ENCODE measurements at regions of chr10 and their contacts with region 1.

Region 1: GRCh38 chr10:89262086-89263051 is 10.8 kb upstream of the LIPA start:
- DNase-seq: peak; percentile 45 to 96
- H3K4me3 ChIP-seq: peak overlapping the region; percentile 20; the same call in 1 of the 2 replicates
- H3K27ac ChIP-seq: peak overlapping the region; percentile 95
- H3K4me1 ChIP-seq: peaks cover 43% of the 10 kb centered on the region
- H3K27me3 ChIP-seq: no peaks in the 10 kb centered on the region
- CTCF ChIP-seq: no peak

Region 2: DNA sequence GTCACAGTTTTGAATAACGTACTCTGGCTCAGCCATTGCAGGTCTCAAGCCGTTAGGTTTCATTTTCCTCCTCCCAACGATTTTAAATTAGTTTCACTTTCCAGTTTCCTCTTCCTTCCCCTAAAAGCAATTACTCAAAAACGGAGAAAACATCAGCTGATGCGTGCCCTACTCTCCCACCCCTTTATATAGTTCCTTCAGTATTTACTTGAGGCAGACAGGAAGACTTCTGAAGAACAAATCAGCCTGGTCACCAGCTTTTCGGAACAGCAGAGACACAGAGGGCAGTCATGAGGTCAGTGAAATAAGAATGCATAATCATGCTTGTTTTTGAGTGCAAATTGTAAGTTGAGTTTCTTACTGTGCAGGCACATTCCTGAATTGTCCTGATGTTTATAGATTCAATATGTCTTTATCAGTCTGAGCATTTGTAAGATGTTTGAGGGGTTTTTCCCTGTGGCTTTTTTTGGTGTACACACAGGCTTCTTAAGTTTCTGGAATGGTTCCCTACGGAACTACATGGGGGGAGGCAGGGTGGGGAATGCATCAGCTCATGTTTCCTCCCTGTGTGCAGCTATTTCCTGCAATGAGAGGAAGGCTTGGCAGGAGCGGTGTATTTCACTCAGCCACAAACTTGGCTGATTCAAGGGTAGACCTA is 65.5 kb after region 1 on chr10 and contains the start of gene IFIT3:
- CTCF ChIA-PET with region 1: no interaction called
- POLR2A ChIA-PET with region 1: no interaction called
- intact Hi-C with region 1: loop called (anchors 1 kb)
- DNase-seq: peak; percentile 36 to 70
- H3K4me3 ChIP-seq: peak within 1 kb of the TSS; percentile 70
- H3K27ac ChIP-seq: peak within 1 kb of the TSS; percentile 96
- H3K4me1 ChIP-seq: peaks cover 23% of the 10 kb centered on the region
- H3K27me3 ChIP-seq: no peaks in the 10 kb centered on the region
- CTCF ChIP-seq: no peak
- total RNA-seq, gene IFIT3: 6.2 and 7.2 TPM in 2 replicates

Region 3: GRCh38 chr10:90592638-90593302 is 1330.4 kb after region 1 on chr10:
- CTCF ChIA-PET with region 1: no interaction called
- POLR2A ChIA-PET with region 1: no interaction called
- intact Hi-C with region 1: no loop called
- DNase-seq: peak in 1 of 2 experiments; percentile 63
- H3K4me3 ChIP-seq: no peak overlapping the region
- H3K27ac ChIP-seq: no peak overlapping the region
- H3K4me1 ChIP-seq: no peaks in the 10 kb centered on the region
- H3K27me3 ChIP-seq: no peaks in the 10 kb centered on the region
- CTCF ChIP-seq: peak; percentile 62

Measured in PC-9 (cell line).